CD8-positive, alpha-beta T cell (primary cell): ENCODE measurements at regions of chr11 and their contacts with region 1.

Region 1: DNA sequence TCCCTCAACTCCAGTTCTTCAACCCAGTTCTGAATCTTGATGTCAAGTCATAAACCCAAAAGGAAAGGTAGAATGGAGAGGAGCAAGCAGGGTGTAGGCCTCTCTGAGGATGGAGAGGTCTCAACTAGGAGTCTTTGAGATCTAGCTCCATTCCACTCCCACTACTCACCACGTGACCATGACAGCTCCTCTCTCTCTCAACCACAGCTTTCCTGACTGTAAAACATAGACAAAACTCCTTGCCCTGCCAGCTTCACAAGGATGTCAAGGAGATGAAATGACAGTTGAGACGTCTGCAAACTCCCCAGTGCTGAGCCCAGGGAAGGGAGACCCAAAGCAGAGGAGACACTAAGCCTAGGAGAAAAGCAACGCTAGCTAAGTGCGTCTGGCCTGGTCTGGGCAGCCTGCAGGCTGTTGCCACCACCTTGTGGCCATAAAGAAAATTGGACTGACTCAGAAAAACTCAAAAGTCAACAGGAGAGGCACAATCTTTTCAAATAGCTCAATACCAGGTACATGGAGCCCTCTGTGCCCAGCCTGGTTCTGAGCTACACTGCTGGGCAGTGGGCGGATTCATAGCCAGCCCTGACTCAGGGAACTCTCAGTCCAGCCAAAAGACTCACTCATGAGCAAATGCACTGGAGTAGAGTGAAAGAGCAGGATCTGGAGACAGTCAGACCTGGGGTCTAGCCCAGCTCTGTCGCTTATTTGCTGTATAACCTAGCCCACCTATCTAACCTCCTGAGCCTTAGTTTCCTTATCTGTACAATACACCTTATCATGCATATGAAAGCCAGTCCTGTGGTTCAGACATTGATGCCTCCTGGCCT is 3.4 kb downstream of the CLPB start:
- DNase-seq: peak in 5 of 9 experiments; percentile 29 to 64 (median 49)
- ATAC-seq: no peak
- H3K4me3 ChIP-seq: no peak overlapping the region
- H3K4me3 Mint-ChIP-seq: no peak overlapping the region
- H3K27ac ChIP-seq: no peak overlapping the region
- H3K27ac Mint-ChIP-seq: peak overlapping the region; percentile 23
- H3K4me1 ChIP-seq: peaks cover 9% of the 10 kb centered on the region
- H3K4me1 Mint-ChIP-seq: peaks cover 36% of the 10 kb centered on the region
- H3K27me3 ChIP-seq: no peaks in the 10 kb centered on the region
- H3K27me3 Mint-ChIP-seq: no peaks in the 10 kb centered on the region
- CTCF ChIP-seq: peak; percentile 58

Region 2: DNA sequence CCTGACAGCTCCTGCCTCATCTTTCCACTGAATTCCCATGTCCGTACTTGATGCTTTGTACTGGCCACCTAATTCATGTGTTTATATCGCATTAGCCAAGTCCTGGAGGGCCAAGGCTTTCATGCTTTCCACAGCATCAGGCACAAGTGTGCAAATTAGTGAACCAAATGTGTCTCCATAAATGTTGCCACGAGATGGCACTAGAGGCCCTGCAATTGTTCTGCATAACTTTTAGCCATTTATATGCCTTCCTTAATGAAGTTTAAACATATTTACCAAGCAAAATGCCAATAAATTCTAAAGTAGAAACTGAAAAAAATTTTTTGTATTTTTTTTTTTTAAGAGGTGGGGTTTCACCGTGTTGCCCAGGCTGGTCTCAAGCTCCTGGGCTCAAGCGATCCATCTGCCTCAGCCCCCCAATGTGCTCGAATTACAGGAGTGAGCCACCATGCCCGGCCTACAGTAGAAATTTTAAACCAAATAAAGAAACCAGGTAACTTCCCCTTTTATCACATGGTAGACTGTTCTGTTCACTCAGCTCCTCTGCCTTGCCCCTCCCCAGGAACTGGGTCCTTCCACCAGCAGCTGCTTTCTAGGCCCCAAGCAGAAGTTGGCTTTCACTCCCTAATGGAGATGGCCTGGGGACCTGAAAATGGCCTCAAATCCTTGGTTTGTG is 453.1 kb before region 1 on chr11:
- CTCF ChIA-PET with region 1: interaction called, 15 read pairs
- POLR2A ChIA-PET with region 1: no interaction called
- intact Hi-C with region 1: loop called in 1 of 2 experiments (anchors 1 kb)
- DNase-seq: peak; percentile 25 to 69 (median 55)
- ATAC-seq: peak; percentile 62
- H3K4me3 ChIP-seq: no peak overlapping the region
- H3K4me3 Mint-ChIP-seq: no peak overlapping the region
- H3K27ac ChIP-seq: no peak overlapping the region
- H3K27ac Mint-ChIP-seq: no peak overlapping the region
- H3K4me1 ChIP-seq: no peaks in the 10 kb centered on the region
- H3K4me1 Mint-ChIP-seq: no peaks in the 10 kb centered on the region
- H3K27me3 ChIP-seq: no peaks in the 10 kb centered on the region
- H3K27me3 Mint-ChIP-seq: no peaks in the 10 kb centered on the region
- CTCF ChIP-seq: peak; percentile 78

Region 3: DNA sequence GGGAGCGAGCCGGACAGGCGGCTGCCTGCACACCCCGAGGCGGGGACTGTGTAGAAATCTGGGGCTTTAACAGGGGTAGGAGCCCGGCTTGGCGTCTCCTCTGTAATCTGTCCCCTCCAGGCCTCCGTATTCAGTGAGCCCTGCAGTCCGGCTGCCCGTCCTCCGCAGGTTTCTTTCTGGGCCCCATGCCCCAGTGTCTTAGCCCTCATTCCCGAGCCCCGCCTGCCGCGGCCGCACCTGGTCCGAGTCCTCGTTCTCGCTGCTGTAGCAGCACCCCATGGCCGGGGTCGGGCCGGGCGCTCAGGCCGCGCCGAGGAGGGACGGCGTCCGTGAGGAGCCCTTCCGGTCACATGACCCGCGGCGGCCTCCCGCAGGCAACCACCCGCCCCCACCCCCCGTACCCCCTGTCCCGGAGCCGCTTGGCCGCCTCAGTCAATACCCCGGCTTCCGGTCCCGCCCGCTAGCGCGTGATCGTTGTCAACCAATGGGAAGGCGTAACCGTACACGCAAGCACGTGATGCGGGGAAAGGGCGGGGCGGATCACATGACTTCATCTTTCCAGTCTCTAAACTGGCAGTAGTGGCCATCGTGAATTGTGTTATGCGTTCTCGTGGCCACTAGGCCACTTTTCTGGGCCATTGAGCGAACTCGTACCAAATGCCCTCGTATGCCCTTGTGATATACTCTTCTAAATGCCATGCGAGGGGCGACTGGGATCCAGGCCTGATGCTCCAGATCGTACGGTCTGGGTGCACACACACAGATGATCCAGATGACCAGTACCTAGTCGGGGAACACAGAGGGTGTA is 327.8 kb before region 1 on chr11 and contains the start of gene LAMTOR1:
- CTCF ChIA-PET with region 1: no interaction called
- POLR2A ChIA-PET with region 1: no interaction called
- intact Hi-C with region 1: loop called in 1 of 2 experiments (anchors 5 kb)
- DNase-seq: peak; percentile 93 to 99 (median 98)
- ATAC-seq: peak; percentile 96
- H3K4me3 ChIP-seq: peak within 1 kb of the TSS; percentile 67 to 93
- H3K4me3 Mint-ChIP-seq: peak within 1 kb of the TSS; percentile 74
- H3K27ac ChIP-seq: peak within 1 kb of the TSS; percentile 90 to 97
- H3K27ac Mint-ChIP-seq: peak within 1 kb of the TSS; percentile 88
- H3K4me1 ChIP-seq: peaks cover 22% of the 10 kb centered on the region
- H3K4me1 Mint-ChIP-seq: peaks cover 45% of the 10 kb centered on the region
- H3K27me3 ChIP-seq: no peaks in the 10 kb centered on the region
- H3K27me3 Mint-ChIP-seq: no peaks in the 10 kb centered on the region
- CTCF ChIP-seq: no peak
- total RNA-seq, gene LAMTOR1: 27.1 to 30.4 TPM

Region 4: GRCh38 chr11:72222907-72223614 is 207.9 kb before region 1 on chr11:
- CTCF ChIA-PET with region 1: no interaction called
- POLR2A ChIA-PET with region 1: no interaction called
- intact Hi-C with region 1: loop called (anchors 1 to 5 kb)
- DNase-seq: peak; percentile 83 to 97 (median 94)
- ATAC-seq: peak; percentile 78
- H3K4me3 ChIP-seq: peak overlapping the region; percentile 48 to 84
- H3K4me3 Mint-ChIP-seq: peak overlapping the region; percentile 87
- H3K27ac ChIP-seq: peak overlapping the region; percentile 23 to 78
- H3K27ac Mint-ChIP-seq: peak overlapping the region; percentile 90
- H3K4me1 ChIP-seq: peaks cover 21% of the 10 kb centered on the region
- H3K4me1 Mint-ChIP-seq: peaks cover 22% of the 10 kb centered on the region
- H3K27me3 ChIP-seq: no peaks in the 10 kb centered on the region
- H3K27me3 Mint-ChIP-seq: peaks cover 4% of the 10 kb centered on the region
- CTCF ChIP-seq: no peak

Region 5: DNA sequence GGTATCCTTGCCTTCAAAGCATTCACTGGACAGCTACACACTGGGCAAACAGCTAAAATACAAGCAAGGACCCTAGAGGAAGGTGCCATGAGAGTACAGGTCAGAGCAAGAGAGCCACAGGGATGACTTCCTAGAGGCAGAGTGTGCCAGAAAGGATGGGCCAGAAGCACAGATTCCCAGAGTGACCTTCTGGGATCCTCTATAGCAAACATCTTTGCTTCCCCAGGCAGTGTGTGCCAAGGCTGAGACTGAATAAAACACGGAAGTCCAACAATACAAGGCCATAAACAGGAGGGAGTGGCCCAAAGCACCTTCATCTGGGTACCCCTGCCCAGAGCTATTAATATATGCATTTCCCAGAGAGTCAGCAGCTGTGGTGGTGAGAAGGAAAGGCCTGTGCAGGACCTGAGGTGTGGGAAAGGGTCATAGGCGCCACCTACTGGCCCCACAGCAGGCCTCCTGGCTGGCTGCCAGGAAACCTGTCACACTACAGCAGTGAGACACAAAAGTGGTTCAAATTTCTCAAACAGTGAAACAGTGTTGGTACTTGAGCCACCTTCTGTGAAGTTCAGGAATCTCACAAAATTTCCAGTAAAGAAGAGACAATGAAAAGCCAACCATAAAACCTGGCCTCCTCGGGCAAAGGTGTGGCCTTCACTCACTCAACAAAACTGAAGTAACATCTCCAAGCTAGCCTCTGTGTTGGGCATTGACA is 16.9 kb before region 1 on chr11:
- CTCF ChIA-PET with region 1: interaction called, 26 read pairs
- POLR2A ChIA-PET with region 1: interaction called, 3 read pairs
- intact Hi-C with region 1: no loop called
- DNase-seq: peak; percentile 47 to 81 (median 75)
- ATAC-seq: peak; percentile 81
- H3K4me3 ChIP-seq: no peak overlapping the region
- H3K4me3 Mint-ChIP-seq: no peak overlapping the region
- H3K27ac ChIP-seq: no peak overlapping the region
- H3K27ac Mint-ChIP-seq: no peak overlapping the region
- H3K4me1 ChIP-seq: no peaks in the 10 kb centered on the region
- H3K4me1 Mint-ChIP-seq: peaks cover 28% of the 10 kb centered on the region
- H3K27me3 ChIP-seq: no peaks in the 10 kb centered on the region
- H3K27me3 Mint-ChIP-seq: no peaks in the 10 kb centered on the region
- CTCF ChIP-seq: peak; percentile 74

Region 6: GRCh38 chr11:73141848-73142286 is 710.9 kb after region 1 on chr11:
- CTCF ChIA-PET with region 1: no interaction called
- POLR2A ChIA-PET with region 1: no interaction called
- intact Hi-C with region 1: loop called in 1 of 2 experiments (anchors 10 kb)
- DNase-seq: peak in 7 of 9 experiments; percentile 23 to 81 (median 66)
- ATAC-seq: peak; percentile 27
- H3K4me3 ChIP-seq: peak overlapping the region; percentile 97 to 99
- H3K4me3 Mint-ChIP-seq: peak overlapping the region; percentile 98
- H3K27ac ChIP-seq: peak overlapping the region; percentile 83 to 87
- H3K27ac Mint-ChIP-seq: peak overlapping the region; percentile 96
- H3K4me1 ChIP-seq: peaks cover 33% of the 10 kb centered on the region
- H3K4me1 Mint-ChIP-seq: peaks cover 52% of the 10 kb centered on the region
- H3K27me3 ChIP-seq: no peaks in the 10 kb centered on the region
- H3K27me3 Mint-ChIP-seq: no peaks in the 10 kb centered on the region
- CTCF ChIP-seq: no peak